ENCODE measurements at regions of chr2 and their contacts with region 1.

Region 1: GRCh38 chr2:136798766-136799165 is 33.4 kb downstream of the THSD7B start:
- DNase-seq: no peak
- ATAC-seq: no peak
- H3K4me3 ChIP-seq: no peak overlapping the region
- H3K27ac ChIP-seq: no peak overlapping the region
- H3K4me1 ChIP-seq: no peaks in the 10 kb centered on the region
- H3K27me3 ChIP-seq: no peaks in the 10 kb centered on the region
- CTCF ChIP-seq: no peak
- EP300 ChIP-seq: no peak
- POLR2A ChIP-seq: no peak
- RAD21 ChIP-seq: no peak

Region 2: DNA sequence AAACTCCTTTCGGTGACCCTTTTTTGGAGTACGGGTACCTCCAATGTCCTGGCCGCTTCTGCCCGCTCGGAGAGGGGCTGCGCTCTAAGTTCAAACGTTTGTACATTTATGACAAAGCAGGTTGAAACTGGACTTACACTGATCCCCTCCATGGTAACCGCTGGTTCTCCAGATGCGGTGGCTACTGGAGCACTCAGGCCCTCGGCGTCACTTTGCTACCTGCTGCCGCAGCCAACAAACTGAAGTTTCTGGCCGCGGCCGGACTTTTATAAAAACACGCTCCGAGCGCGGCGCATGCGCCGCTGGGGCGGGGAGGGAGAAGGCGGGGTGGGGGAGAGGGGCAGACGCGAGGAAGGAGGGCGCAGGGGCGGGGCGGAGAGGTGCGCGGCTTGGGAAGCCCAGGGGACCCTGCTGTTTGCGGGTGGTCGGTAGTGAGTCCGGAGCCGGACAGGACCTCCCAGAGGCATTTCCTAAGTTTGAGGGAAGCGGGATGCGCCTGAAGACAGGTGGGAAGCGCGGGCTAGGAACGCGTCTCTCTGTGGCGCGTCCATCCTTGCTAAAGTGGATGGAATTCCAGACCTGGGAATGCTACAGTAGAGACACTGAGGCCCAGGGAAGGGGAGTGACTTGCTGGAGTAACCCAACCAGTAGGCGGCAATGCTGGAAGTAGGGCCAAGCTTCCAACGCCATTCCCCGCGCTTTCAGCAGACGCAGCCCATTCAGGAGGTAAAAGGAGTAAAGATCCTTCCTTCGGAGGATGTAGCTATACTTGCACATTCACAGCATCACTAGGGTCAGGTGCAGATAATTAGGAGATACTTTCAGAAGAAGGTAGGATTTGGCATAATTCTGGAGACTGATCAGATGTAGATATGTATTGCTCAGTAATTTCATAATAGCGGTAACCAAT is 680.6 kb before region 1 on chr2 and contains the start of gene CXCR4:
- CTCF ChIA-PET with region 1: no interaction called
- POLR2A ChIA-PET with region 1: no interaction called
- in situ Hi-C with region 1: no loop called
- intact Hi-C with region 1: no loop called
- DNase-seq: no peak
- ATAC-seq: peak; percentile 61
- H3K4me3 ChIP-seq: peak within 1 kb of the TSS; percentile 39 to 58 (median 39); a peak in 5 of 6 replicates
- H3K27ac ChIP-seq: no peak within 1 kb of the TSS
- H3K4me1 ChIP-seq: peaks cover 8% of the 10 kb centered on the region; the same call in 1 of the 2 replicates
- H3K27me3 ChIP-seq: peaks cover 0 to 62% of the 10 kb centered on the region in 2 experiments; a peak in 4 of 5 replicates
- CTCF ChIP-seq: no peak; the same call in 1 of the 2 replicates
- EP300 ChIP-seq: no peak
- POLR2A ChIP-seq: no peak
- RAD21 ChIP-seq: no peak
- total RNA-seq, gene CXCR4: 0.29 and 0.55 TPM in 2 replicates

Region 3: GRCh38 chr2:136770384-136770783 is 28.4 kb before region 1 on chr2:
- CTCF ChIA-PET with region 1: no interaction called
- POLR2A ChIA-PET with region 1: no interaction called
- in situ Hi-C with region 1: no loop called
- intact Hi-C with region 1: loop called (anchors 1 kb)
- DNase-seq: no peak
- ATAC-seq: peak; percentile 41; the same call in 2 of the 3 replicates
- H3K4me3 ChIP-seq: no peak overlapping the region
- H3K27ac ChIP-seq: no peak overlapping the region
- H3K4me1 ChIP-seq: no peaks in the 10 kb centered on the region
- H3K27me3 ChIP-seq: peaks cover 0 to 17% of the 10 kb centered on the region in 2 experiments; a peak in 2 of 5 replicates
- CTCF ChIP-seq: no peak
- EP300 ChIP-seq: no peak
- POLR2A ChIP-seq: no peak
- RAD21 ChIP-seq: no peak

Measured in HepG2 (cell line).